ENCODE measurements at regions of chr11 and their contacts with region 1.

Region 1: GRCh38 chr11:118851970-118852369 is 31.7 kb upstream of the CXCR5 start:
- DNase-seq: no peak
- ATAC-seq: peak; percentile 87
- H3K4me3 Mint-ChIP-seq: peak overlapping the region; percentile 55
- H3K27ac Mint-ChIP-seq: peak overlapping the region; percentile 64
- H3K4me1 Mint-ChIP-seq: peaks cover 42% of the 10 kb centered on the region
- H3K27me3 Mint-ChIP-seq: no peaks in the 10 kb centered on the region
- CTCF ChIP-seq: no peak

Region 2: DNA sequence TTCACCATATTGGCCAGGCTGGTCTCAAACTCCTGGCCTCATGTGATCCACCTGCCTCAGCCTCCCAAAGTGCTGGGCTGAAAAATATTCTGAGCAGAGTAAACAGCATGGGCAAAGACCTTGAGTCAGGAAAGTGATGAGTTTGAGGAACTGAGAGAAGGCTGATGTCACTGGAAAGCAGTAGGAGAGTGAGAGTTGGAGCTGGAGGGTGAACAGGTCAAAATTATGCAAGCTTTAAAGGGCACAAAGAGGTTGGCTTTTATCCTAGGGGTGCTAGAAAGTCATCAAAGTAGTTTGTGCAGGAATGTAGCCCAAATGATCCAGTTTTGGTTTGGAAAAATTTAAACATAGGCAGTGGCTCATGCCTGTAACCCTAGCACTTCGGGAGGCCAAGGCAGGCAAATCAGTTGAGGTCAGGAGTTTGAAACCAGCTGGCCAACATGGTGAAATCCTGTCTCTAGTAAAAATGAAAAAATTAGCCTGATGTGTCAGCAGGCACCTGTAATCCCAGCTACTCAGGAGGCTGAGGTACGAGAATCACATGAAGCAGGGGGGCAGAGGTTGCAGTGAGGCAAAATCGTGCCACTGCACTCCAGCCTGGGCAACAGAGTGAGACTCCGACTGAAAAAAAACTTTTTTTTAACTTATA is 12.9 kb before region 1 on chr11:
- CTCF ChIA-PET with region 1: interaction called, 3 read pairs
- POLR2A ChIA-PET with region 1: interaction called, 7 read pairs
- intact Hi-C with region 1: loop called (anchors 2 kb)
- DNase-seq: no peak
- ATAC-seq: peak; percentile 78
- H3K4me3 Mint-ChIP-seq: peak overlapping the region; percentile 47
- H3K27ac Mint-ChIP-seq: peak overlapping the region; percentile 85
- H3K4me1 Mint-ChIP-seq: peaks cover 61% of the 10 kb centered on the region
- H3K27me3 Mint-ChIP-seq: no peaks in the 10 kb centered on the region
- CTCF ChIP-seq: no peak

Region 3: GRCh38 chr11:118878163-118878563 is 26.2 kb after region 1 on chr11:
- CTCF ChIA-PET with region 1: no interaction called
- POLR2A ChIA-PET with region 1: interaction called, 27 read pairs
- intact Hi-C with region 1: no loop called
- DNase-seq: no peak
- ATAC-seq: no peak
- H3K4me3 Mint-ChIP-seq: no peak overlapping the region
- H3K27ac Mint-ChIP-seq: peak overlapping the region; percentile 89
- H3K4me1 Mint-ChIP-seq: peaks cover 89% of the 10 kb centered on the region
- H3K27me3 Mint-ChIP-seq: no peaks in the 10 kb centered on the region
- CTCF ChIP-seq: no peak